Dendritic cell treated with granulocyte-macrophage colony-stimulating factor and Interleukin-4, amounts not matched to agents 40 ng/mL and 50 ng/mL, for 4 days (primary cell): ENCODE measurements at regions of chr14 and their contacts with region 1.

Region 1: GRCh38 chr14:105300792-105301533 is at the start of gene BRF1:
- H3K4me3 Mint-ChIP-seq: peak within 1 kb of the TSS; percentile 85
- H3K27ac Mint-ChIP-seq: peak within 1 kb of the TSS; percentile 92
- H3K4me1 Mint-ChIP-seq: peaks cover 76% of the 10 kb centered on the region
- H3K27me3 Mint-ChIP-seq: no peaks in the 10 kb centered on the region

Region 2: GRCh38 chr14:105041841-105042765 is 258.9 kb before region 1 on chr14:
- intact Hi-C with region 1: no loop called
- H3K4me3 Mint-ChIP-seq: no peak overlapping the region
- H3K27ac Mint-ChIP-seq: no peak overlapping the region
- H3K4me1 Mint-ChIP-seq: peaks cover 35% of the 10 kb centered on the region
- H3K27me3 Mint-ChIP-seq: peaks cover 16% of the 10 kb centered on the region

Region 3: GRCh38 chr14:105255021-105255507 is 45.9 kb before region 1 on chr14:
- intact Hi-C with region 1: no loop called
- H3K4me3 Mint-ChIP-seq: no peak overlapping the region
- H3K27ac Mint-ChIP-seq: no peak overlapping the region
- H3K4me1 Mint-ChIP-seq: peaks cover 13% of the 10 kb centered on the region
- H3K27me3 Mint-ChIP-seq: no peaks in the 10 kb centered on the region

Region 4: GRCh38 chr14:105314287-105315200 is 13.6 kb after region 1 on chr14 and contains the start of gene PACS2:
- intact Hi-C with region 1: loop called (anchors 1 kb)
- H3K4me3 Mint-ChIP-seq: peak within 1 kb of the TSS; percentile 94
- H3K27ac Mint-ChIP-seq: peak within 1 kb of the TSS; percentile 88
- H3K4me1 Mint-ChIP-seq: peaks cover 45% of the 10 kb centered on the region
- H3K27me3 Mint-ChIP-seq: no peaks in the 10 kb centered on the region